CD14-positive monocyte (primary cell): ENCODE measurements at regions of chr11 and their contacts with region 1.

Region 1: DNA sequence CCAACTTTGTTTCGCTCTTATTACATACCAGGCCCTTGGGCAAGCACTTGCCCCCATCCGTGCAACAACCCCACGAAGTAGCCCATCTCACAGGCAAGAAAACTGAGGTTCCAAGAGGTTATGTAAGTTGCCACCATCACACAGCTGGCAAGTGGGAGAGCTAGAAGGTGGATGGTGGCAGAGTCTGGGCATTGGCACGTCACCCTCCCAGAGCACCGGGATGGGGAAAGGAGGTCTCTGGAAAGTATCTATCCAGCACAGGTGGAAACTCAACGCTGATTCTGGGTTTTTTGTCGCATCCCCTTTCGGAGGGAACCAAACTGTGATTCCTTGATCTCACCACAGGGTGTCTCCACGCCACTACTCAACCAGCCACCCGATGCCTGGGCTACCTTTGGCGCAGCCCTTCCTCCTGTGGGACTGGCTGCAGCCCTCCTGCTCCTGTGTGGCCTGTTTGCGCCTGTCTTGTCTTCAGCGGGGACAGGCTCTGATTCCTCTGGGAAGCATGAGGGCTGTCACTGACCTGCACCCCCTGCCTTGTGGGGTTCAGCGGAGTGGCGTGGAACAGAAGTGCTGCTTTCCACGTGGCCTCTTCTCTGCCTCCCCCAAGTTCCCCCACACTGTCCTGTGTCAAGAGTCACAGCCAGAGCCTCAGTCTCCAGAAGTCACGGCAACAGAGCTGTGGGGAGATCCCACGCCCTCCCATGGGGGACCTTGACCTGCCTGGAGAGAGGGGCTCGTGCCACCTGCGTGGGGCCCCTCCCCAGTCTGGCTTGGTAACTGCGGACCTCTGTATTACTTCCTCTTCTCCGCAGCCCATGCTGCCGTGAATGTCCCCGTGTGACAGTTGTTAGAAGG is 34.4 kb upstream of the TRIM29 start:
- DNase-seq: peak; percentile 54 to 81 (median 70)
- H3K4me3 ChIP-seq: peak overlapping the region; percentile 20 to 69 (median 25)
- H3K4me3 Mint-ChIP-seq: peak overlapping the region; percentile 73 to 87
- H3K27ac ChIP-seq: no peak overlapping the region
- H3K27ac Mint-ChIP-seq: peak overlapping the region in 3 of 7 donors; percentile 31 to 53 (median 46)
- H3K4me1 ChIP-seq: peaks cover 19 to 31% of the 10 kb centered on the region in 2 donors
- H3K4me1 Mint-ChIP-seq: peaks cover 24% of the 10 kb centered on the region
- H3K27me3 ChIP-seq: peaks cover 20 to 69% of the 10 kb centered on the region in 2 donors
- H3K27me3 Mint-ChIP-seq: peaks cover 65 to 77% (median 71%) of the 10 kb centered on the region in 3 donors
- CTCF ChIP-seq: peak; percentile 87

Region 2: DNA sequence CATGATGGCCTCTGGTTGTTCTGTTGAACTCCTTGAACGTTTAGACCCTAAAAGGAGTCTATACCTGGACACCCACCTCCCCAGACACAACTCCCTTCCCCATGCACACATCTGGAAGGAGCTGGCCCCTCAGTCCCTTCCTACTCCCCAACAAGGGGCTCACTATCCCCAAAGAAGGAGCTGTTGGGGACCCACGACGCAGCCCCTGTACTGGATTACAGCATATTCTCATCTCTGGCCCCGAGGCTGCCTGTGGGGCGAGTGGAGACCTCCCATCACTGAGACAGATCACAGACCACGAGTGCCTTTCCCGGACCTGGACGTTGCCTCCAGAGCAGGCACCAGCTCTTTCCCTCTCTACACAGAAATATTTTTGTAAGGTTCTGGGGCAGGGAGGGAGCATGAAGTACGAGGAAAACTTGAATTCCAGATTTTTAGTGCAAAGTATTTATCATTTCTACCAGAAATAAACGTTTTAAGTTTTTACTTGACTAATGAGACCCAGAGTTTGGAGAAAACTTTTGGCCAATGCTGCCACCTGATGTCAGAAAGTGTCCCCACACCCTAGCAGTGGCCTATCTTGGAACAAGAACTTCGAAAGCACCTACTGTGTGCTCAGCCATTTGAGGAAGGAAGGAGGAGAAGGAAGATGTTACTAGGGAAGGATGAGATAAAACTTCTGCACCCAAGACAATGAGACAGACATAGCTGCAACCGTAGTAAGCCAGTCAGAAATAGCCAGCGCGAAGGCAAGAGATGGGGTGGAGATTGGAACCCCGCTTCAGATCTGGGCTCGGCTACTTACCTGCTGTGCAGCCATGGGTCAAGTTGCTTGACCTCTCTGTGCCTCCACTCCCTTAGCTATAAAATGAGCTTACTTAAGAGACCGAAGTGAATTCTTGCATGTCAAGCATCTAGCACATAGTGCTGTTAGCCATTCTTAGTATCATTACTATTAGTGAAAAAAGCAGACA is 57.5 kb after region 1 on chr11:
- intact Hi-C with region 1: loop called (anchors 1 to 2 kb)
- DNase-seq: peak in 2 of 3 donors; percentile 54 to 68
- H3K4me3 ChIP-seq: no peak overlapping the region
- H3K4me3 Mint-ChIP-seq: no peak overlapping the region
- H3K27ac ChIP-seq: no peak overlapping the region
- H3K27ac Mint-ChIP-seq: no peak overlapping the region
- H3K4me1 ChIP-seq: peaks cover 16 to 22% of the 10 kb centered on the region in 2 donors
- H3K4me1 Mint-ChIP-seq: peaks cover 25% of the 10 kb centered on the region
- H3K27me3 ChIP-seq: peaks cover 0 to 19% of the 10 kb centered on the region in 2 donors
- H3K27me3 Mint-ChIP-seq: peaks cover 16 to 22% (median 18%) of the 10 kb centered on the region in 3 donors
- CTCF ChIP-seq: peak; percentile 78

Region 3: DNA sequence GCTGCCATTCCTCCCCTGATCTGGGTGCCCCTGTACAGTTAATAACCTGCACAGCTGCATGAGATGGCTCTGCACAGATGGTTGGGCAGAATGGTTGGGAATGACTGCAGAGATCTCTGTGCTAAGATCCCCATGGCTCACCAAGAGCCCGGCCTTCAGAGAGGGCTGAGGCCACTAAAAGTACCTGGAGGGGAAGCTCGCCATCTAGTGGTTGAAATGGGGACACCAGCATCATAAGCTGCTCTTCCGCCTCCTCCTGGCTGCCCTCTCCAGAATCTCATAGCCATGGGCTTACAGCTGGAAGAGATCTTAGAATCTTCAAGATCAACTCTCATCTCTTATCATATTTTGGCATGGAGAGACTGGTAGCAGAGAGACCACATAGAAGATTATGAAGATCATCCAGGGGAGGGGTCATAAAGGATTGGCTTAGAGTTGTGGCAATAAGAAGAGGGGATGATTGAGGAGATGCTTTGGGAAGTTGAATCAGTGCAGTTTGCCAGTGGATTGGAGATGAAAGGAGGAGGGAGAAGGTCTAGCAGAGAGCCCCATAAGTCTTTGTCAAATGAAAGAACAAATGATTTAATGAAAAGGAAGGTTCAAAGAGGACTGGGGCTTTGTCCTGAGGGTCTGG is 130.8 kb after region 1 on chr11:
- intact Hi-C with region 1: loop called (anchors 5 kb)
- DNase-seq: peak; percentile 58 to 71 (median 67)
- H3K4me3 ChIP-seq: no peak overlapping the region
- H3K4me3 Mint-ChIP-seq: peak overlapping the region in 1 of 2 donors; percentile 32
- H3K27ac ChIP-seq: no peak overlapping the region
- H3K27ac Mint-ChIP-seq: no peak overlapping the region
- H3K4me1 ChIP-seq: no peaks in the 10 kb centered on the region
- H3K4me1 Mint-ChIP-seq: peaks cover 1% of the 10 kb centered on the region
- H3K27me3 ChIP-seq: peaks cover 0 to 10% of the 10 kb centered on the region in 2 donors
- H3K27me3 Mint-ChIP-seq: peaks cover 34 to 57% (median 45%) of the 10 kb centered on the region in 3 donors
- CTCF ChIP-seq: peak; percentile 71

Region 4: GRCh38 chr11:120384476-120384875 is 212.2 kb after region 1 on chr11:
- intact Hi-C with region 1: no loop called
- DNase-seq: no peak
- H3K4me3 ChIP-seq: no peak overlapping the region
- H3K4me3 Mint-ChIP-seq: no peak overlapping the region
- H3K27ac ChIP-seq: no peak overlapping the region
- H3K27ac Mint-ChIP-seq: no peak overlapping the region
- H3K4me1 ChIP-seq: no peaks in the 10 kb centered on the region
- H3K4me1 Mint-ChIP-seq: peaks cover 2% of the 10 kb centered on the region
- H3K27me3 ChIP-seq: peaks cover 36 to 69% of the 10 kb centered on the region in 2 donors
- H3K27me3 Mint-ChIP-seq: peaks cover 12 to 53% (median 30%) of the 10 kb centered on the region in 3 donors
- CTCF ChIP-seq: no peak